ENCODE measurements at regions of chr10 and their contacts with region 1.

Region 1: GRCh38 chr10:93376372-93377293 is 105.5 kb downstream of the MYOF start:
- DNase-seq: peak in 4 of 5 donors; percentile 24 to 67 (median 58)
- H3K4me3 ChIP-seq: no peak overlapping the region
- H3K4me3 Mint-ChIP-seq: no peak overlapping the region
- H3K27ac ChIP-seq: no peak overlapping the region
- H3K27ac Mint-ChIP-seq: no peak overlapping the region
- H3K4me1 ChIP-seq: no peaks in the 10 kb centered on the region
- H3K4me1 Mint-ChIP-seq: peaks cover 6 to 16% (median 10%) of the 10 kb centered on the region in 3 donors
- H3K27me3 ChIP-seq: no peaks in the 10 kb centered on the region
- H3K27me3 Mint-ChIP-seq: peaks cover 0 to 8% of the 10 kb centered on the region in 2 donors

Region 2: DNA sequence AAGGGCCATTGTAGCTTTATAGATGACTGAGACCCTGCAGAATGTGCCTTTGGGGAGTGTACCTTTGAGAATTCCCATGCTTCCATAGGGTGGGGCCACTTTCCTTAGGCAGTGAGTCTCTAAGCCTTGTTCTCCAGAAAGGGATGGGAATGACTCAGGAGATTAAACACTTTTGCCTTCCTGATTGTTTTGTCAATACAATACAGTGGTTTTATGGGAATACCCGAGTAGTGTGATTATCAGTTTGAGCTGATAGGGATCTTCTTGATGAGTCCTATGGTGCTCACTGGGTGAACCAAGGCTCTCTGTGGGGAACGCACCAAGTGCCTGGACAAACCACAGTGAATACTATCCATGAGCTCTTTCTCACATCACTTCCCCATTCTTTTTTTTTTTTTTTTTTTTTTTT is 99.2 kb after region 1 on chr10:
- CTCF ChIA-PET with region 1: interaction called, 220 read pairs
- POLR2A ChIA-PET with region 1: interaction called, 12 read pairs
- DNase-seq: no peak
- H3K4me3 ChIP-seq: no peak overlapping the region
- H3K4me3 Mint-ChIP-seq: no peak overlapping the region
- H3K27ac ChIP-seq: no peak overlapping the region
- H3K27ac Mint-ChIP-seq: no peak overlapping the region
- H3K4me1 ChIP-seq: no peaks in the 10 kb centered on the region
- H3K4me1 Mint-ChIP-seq: no peaks in the 10 kb centered on the region
- H3K27me3 ChIP-seq: peaks cover 3% of the 10 kb centered on the region
- H3K27me3 Mint-ChIP-seq: peaks cover 4 to 6% of the 10 kb centered on the region in 2 donors

Region 3: DNA sequence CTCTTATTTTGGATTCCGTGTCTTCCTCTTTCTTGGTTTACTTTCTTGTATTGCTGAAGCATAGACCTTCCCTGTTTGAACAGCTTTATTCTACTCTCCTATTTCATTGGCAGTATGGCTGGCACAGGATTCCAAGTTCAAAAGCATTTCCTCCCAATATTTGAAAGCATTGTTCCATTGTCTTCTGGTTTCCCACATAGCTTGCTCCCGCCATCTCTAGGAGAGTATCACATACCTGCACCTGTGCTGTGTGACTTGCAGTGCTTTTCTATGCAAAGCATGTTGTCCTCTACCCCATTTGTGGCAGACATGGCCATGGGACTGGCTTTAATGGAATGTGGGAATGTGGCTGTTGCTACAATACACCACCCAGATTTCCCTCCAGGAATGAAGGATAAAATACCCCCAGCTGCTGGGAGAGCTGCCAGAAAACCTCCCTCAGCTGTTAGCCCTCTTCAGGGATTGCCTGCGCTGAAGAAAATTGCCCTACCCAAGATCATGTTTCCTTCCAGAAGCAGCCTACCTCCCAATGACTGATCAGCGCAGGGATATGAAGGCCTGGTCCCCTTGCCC is 112.4 kb after region 1 on chr10:
- CTCF ChIA-PET with region 1: interaction called, 220 read pairs
- POLR2A ChIA-PET with region 1: no interaction called
- DNase-seq: no peak
- H3K4me3 ChIP-seq: no peak overlapping the region
- H3K4me3 Mint-ChIP-seq: no peak overlapping the region
- H3K27ac ChIP-seq: no peak overlapping the region
- H3K27ac Mint-ChIP-seq: peak overlapping the region in 1 of 8 donors; percentile 91
- H3K4me1 ChIP-seq: no peaks in the 10 kb centered on the region
- H3K4me1 Mint-ChIP-seq: no peaks in the 10 kb centered on the region
- H3K27me3 ChIP-seq: no peaks in the 10 kb centered on the region
- H3K27me3 Mint-ChIP-seq: peaks cover 19 to 43% of the 10 kb centered on the region in 2 donors

Region 4: DNA sequence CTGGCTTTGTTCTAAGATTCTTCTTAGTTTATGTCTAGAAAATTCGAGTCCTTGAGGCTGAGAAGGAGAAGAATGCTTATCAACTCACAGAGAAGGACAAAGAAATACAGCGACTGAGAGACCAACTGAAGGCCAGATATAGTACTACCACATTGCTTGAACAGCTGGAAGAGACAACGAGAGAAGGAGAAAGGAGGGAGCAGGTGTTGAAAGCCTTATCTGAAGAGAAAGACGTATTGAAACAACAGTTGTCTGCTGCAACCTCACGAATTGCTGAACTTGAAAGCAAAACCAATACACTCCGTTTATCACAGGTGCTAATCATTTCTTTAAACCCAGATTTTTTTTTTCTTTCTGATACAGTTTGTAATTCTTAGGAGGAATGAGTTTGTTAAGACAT is 126.4 kb after region 1 on chr10:
- CTCF ChIA-PET with region 1: interaction called, 53 read pairs
- POLR2A ChIA-PET with region 1: interaction called, 3 read pairs
- DNase-seq: no peak
- H3K4me3 ChIP-seq: peak overlapping the region; percentile 24
- H3K4me3 Mint-ChIP-seq: peak overlapping the region; percentile 17 to 82 (median 56)
- H3K27ac ChIP-seq: no peak overlapping the region
- H3K27ac Mint-ChIP-seq: peak overlapping the region in 6 of 8 donors; percentile 6 to 94 (median 58)
- H3K4me1 ChIP-seq: no peaks in the 10 kb centered on the region
- H3K4me1 Mint-ChIP-seq: peaks cover 13 to 47% (median 27%) of the 10 kb centered on the region in 3 donors
- H3K27me3 ChIP-seq: no peaks in the 10 kb centered on the region
- H3K27me3 Mint-ChIP-seq: no peaks in the 10 kb centered on the region